ENCODE measurements at regions of chr3 and their contacts with region 1.

Region 1: DNA sequence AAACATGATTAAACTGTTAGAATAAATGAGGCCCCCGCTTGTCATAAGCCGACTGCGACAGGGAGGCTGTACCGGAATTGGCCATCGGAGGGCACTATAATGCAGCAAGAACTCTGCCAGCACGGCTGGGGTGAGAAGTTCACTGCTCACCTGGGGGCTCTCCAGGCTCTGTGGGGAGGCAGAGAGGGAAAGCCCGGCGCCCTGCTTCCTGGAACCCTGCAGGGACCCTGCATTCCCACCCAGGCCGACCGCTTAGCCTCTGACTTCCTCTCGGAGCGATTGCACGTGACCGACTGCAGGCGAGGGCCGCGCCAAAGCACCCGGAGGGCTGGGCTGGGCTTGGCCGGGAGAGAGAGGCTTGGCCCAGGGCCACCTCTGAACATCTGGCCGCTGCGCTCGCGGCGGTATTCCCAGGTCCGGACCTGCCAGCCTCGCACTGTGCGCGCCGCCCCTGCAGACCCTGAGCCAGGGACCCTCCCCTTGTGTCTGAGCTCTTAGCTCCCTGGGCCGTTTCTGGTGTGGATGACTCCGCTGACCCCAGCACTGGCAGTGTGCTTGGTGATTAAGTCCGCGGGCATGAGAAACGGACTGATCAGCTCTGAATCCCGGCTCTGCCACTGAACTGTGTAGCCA is 26.2 kb downstream of the DRD3 start:
- DNase-seq: peak; percentile 75
- H3K4me3 Mint-ChIP-seq: peak overlapping the region; percentile 66
- H3K27ac Mint-ChIP-seq: no peak overlapping the region
- H3K4me1 Mint-ChIP-seq: peaks cover 7% of the 10 kb centered on the region
- H3K27me3 Mint-ChIP-seq: peaks cover 24% of the 10 kb centered on the region
- CTCF ChIP-seq: peak; percentile 84

Region 2: GRCh38 chr3:114168150-114168549 is 15.5 kb after region 1 on chr3:
- CTCF ChIA-PET with region 1: interaction called, 10 read pairs
- POLR2A ChIA-PET with region 1: no interaction called
- intact Hi-C with region 1: no loop called
- DNase-seq: peak; percentile 12
- H3K4me3 Mint-ChIP-seq: no peak overlapping the region
- H3K27ac Mint-ChIP-seq: no peak overlapping the region
- H3K4me1 Mint-ChIP-seq: no peaks in the 10 kb centered on the region
- H3K27me3 Mint-ChIP-seq: peaks cover 57% of the 10 kb centered on the region
- CTCF ChIP-seq: no peak

Region 3: DNA sequence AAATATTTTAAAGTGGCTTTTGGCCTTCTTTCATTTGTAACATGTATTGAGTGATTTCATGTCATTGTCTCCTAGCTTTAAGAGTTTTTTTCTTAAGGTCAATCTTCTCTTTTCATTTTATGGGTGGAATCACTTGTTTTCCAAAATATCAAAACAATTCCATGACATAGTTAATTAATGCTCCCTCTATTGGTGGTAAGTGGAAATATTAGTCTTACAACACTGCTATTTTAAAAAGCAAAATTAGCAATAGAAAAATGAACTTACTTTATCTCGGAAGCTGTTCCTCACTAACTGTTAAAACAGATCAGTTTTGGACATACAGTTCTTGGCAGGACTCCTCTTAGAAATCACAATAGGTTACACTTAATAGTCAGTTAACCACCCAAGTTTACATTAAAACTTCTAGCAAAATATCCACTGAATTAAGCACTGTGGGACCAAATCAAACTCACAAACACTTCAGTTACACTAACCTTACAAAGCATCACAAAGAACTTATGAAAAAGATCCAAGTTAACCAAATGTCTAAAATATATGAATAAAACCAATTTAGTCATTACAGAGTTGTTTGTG is 183.6 kb after region 1 on chr3:
- CTCF ChIA-PET with region 1: interaction called, 12 read pairs
- POLR2A ChIA-PET with region 1: no interaction called
- intact Hi-C with region 1: loop called (anchors 1 kb)
- DNase-seq: no peak
- H3K4me3 Mint-ChIP-seq: no peak overlapping the region
- H3K27ac Mint-ChIP-seq: no peak overlapping the region
- H3K4me1 Mint-ChIP-seq: no peaks in the 10 kb centered on the region
- H3K27me3 Mint-ChIP-seq: no peaks in the 10 kb centered on the region
- CTCF ChIP-seq: peak; percentile 30